CD8-positive, alpha-beta T cell (primary cell): ENCODE measurements at regions of chr12 and their contacts with region 1.

Region 1: DNA sequence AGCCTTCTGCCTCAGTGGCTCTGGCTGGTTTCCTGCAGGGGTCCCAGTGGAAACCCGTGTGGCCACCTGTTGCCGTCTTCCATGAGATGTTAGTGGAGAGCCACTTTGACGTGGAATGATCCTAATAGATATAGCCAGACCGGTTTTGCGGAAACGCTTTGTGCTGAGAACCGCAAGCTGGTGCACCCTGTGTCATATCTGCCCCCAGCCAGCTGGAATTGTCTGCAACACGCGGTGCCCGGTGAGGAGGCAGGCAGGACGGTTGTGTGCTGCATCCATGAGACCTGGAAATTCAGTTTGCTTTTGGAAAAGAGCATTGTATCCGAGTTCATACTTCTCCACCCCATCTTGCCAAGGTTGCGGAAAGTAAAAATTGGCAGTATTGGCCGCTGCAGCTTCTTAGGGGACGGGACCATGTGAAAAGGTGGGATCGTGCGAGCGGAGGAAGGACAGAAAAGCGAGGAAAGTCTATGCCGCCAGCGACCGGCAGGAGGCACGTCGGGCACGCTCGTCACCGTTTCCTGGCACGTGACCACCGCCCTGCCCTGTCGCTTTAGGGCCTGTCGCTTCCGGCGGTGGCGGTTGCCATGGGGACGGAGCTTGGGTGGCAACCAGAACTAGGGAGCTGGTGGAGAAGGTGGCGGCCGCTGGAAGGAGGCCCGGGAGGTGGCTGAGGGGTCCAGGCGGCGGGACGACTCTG is at the start of gene CFAP251:
- DNase-seq: peak; percentile 86 to 98 (median 97)
- ATAC-seq: peak; percentile 97
- H3K4me3 ChIP-seq: peak within 1 kb of the TSS; percentile 43 to 54
- H3K4me3 Mint-ChIP-seq: peak within 1 kb of the TSS; percentile 84
- H3K27ac ChIP-seq: peak within 1 kb of the TSS; percentile 54 to 84
- H3K27ac Mint-ChIP-seq: peak within 1 kb of the TSS; percentile 90
- H3K4me1 ChIP-seq: peaks cover 11% of the 10 kb centered on the region
- H3K4me1 Mint-ChIP-seq: peaks cover 12% of the 10 kb centered on the region
- H3K27me3 ChIP-seq: no peaks in the 10 kb centered on the region
- H3K27me3 Mint-ChIP-seq: no peaks in the 10 kb centered on the region
- CTCF ChIP-seq: peak; percentile 61
- total RNA-seq, gene CFAP251: 0.33 to 0.68 TPM

Region 2: GRCh38 chr12:121536899-121537813 is 381.0 kb before region 1 on chr12:
- CTCF ChIA-PET with region 1: no interaction called
- POLR2A ChIA-PET with region 1: no interaction called
- intact Hi-C with region 1: loop called in 1 of 2 experiments (anchors 10 kb)
- DNase-seq: peak in 8 of 9 experiments; percentile 22 to 83 (median 58)
- ATAC-seq: peak; percentile 5
- H3K4me3 ChIP-seq: peak overlapping the region; percentile 52 to 68
- H3K4me3 Mint-ChIP-seq: peak overlapping the region; percentile 80
- H3K27ac ChIP-seq: peak overlapping the region; percentile 80 to 83
- H3K27ac Mint-ChIP-seq: peak overlapping the region; percentile 96
- H3K4me1 ChIP-seq: peaks cover 34% of the 10 kb centered on the region
- H3K4me1 Mint-ChIP-seq: peaks cover 43% of the 10 kb centered on the region
- H3K27me3 ChIP-seq: no peaks in the 10 kb centered on the region
- H3K27me3 Mint-ChIP-seq: no peaks in the 10 kb centered on the region
- CTCF ChIP-seq: no peak

Region 3: DNA sequence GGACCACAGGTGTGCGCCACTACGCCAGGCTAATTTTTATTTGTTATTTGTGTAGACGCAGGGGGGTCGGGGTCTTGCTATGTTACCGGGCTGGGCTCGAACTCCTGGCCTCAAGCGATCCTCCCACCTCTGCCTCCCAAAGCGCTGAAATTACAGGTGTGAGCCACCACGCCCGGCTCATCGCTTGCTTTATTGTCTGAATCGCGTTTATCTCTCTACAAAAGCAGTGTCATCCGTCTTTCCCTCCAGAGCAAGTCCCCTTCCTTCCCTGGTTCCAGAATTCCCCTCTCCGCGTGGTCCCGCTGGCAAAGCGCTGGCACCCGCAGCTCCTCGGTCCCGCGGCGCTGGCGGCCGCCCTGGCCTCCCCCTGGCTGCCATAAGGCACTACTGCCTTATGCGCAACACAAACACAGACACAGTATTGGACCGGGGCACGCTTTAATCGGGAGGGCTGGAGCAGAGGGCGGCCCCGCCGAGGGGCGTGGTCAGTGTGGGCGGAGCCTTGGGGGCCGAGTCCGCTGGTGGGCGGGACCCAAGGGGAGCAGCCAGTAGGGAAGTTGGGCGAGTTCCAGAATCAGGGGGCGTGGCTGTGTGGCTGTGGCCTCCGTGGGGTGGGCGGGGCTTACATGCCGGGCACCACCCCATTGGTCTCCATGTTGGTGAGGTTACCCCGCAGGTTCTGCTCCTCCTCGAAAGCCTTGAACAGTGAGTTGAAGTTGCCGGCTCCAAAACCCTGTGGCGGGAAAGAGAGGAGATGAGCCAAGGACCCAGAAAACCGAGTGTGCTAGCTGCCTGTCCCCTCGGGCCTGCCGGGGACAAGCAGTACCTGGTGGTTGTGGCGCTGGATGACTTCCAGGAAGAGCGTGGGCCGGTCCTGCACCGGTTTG is 78.8 kb before region 1 on chr12:
- CTCF ChIA-PET with region 1: no interaction called
- POLR2A ChIA-PET with region 1: no interaction called
- intact Hi-C with region 1: loop called in 1 of 2 experiments (anchors 1 kb)
- DNase-seq: peak; percentile 99 to 100 (median 100)
- ATAC-seq: peak; percentile 97
- H3K4me3 ChIP-seq: peak overlapping the region; percentile 73 to 95
- H3K4me3 Mint-ChIP-seq: peak overlapping the region; percentile 97
- H3K27ac ChIP-seq: peak overlapping the region; percentile 34 to 54
- H3K27ac Mint-ChIP-seq: peak overlapping the region; percentile 88
- H3K4me1 ChIP-seq: peaks cover 7% of the 10 kb centered on the region
- H3K4me1 Mint-ChIP-seq: peaks cover 13% of the 10 kb centered on the region
- H3K27me3 ChIP-seq: no peaks in the 10 kb centered on the region
- H3K27me3 Mint-ChIP-seq: no peaks in the 10 kb centered on the region
- CTCF ChIP-seq: peak; percentile 27

Region 4: DNA sequence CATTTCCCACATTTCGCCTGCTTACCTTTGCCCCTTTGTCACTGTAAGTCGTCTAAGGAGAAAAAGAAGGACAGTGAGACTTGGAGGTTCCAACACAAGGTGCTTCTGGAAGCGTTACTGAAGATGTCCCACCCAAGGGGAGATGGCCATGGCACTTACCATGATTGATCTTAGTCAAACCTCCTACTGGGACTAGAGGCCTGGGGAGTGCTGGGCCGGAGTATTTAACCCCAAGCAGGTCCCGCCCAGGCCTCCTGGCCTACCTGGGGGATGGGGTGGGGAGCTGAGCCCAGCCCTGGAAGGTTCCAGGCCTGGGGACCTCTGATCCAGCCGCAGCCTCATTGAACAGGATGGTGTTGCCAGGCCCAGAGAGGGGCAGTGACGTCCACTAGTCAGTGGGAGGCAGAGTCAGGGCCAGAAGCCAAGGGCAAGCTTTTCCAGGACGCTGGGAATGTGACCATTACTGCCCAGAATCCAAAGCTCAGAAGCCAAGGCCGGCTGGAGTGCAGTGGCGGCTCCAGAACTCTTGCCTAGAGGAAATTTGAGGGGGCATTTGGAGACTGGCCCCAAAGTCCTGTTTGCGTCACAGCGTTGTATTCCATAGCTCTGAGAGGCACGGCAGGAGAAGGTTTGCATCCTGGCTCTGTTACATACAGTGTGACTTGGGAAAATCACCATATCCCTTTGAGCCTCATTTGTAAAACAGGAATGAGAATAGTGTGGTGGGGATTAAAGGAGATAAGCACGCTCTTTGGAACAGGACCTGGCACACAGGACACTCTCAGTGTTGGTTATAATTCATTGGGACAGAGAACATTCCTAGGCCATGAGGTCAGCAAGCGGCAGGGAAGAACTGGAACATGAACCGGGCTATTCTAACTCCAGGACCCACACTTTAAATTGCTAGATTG is 59.2 kb before region 1 on chr12 and contains the start of gene HPD:
- CTCF ChIA-PET with region 1: no interaction called
- POLR2A ChIA-PET with region 1: no interaction called
- intact Hi-C with region 1: no loop called
- DNase-seq: no peak
- ATAC-seq: no peak
- H3K4me3 ChIP-seq: no peak within 1 kb of the TSS
- H3K4me3 Mint-ChIP-seq: no peak within 1 kb of the TSS
- H3K27ac ChIP-seq: no peak within 1 kb of the TSS
- H3K27ac Mint-ChIP-seq: no peak within 1 kb of the TSS
- H3K4me1 ChIP-seq: no peaks in the 10 kb centered on the region
- H3K4me1 Mint-ChIP-seq: no peaks in the 10 kb centered on the region
- H3K27me3 ChIP-seq: no peaks in the 10 kb centered on the region
- H3K27me3 Mint-ChIP-seq: no peaks in the 10 kb centered on the region
- CTCF ChIP-seq: no peak
- total RNA-seq, gene HPD: not detected

Region 5: GRCh38 chr12:122021822-122022526 is 103.8 kb after region 1 on chr12 and contains the start of gene BCL7A:
- CTCF ChIA-PET with region 1: interaction called, 7 read pairs
- POLR2A ChIA-PET with region 1: no interaction called
- intact Hi-C with region 1: loop called (anchors 2 kb)
- DNase-seq: peak; percentile 34 to 75 (median 53)
- ATAC-seq: peak; percentile 78
- H3K4me3 ChIP-seq: peak within 1 kb of the TSS; percentile 37 to 57
- H3K4me3 Mint-ChIP-seq: peak within 1 kb of the TSS; percentile 91
- H3K27ac ChIP-seq: no peak within 1 kb of the TSS
- H3K27ac Mint-ChIP-seq: peak within 1 kb of the TSS; percentile 75
- H3K4me1 ChIP-seq: peaks cover 18% of the 10 kb centered on the region
- H3K4me1 Mint-ChIP-seq: peaks cover 12% of the 10 kb centered on the region
- H3K27me3 ChIP-seq: peaks cover 0 to 4% of the 10 kb centered on the region in 2 experiments
- H3K27me3 Mint-ChIP-seq: peaks cover 4% of the 10 kb centered on the region
- CTCF ChIP-seq: no peak
- total RNA-seq, gene BCL7A: 6.8 to 7.8 TPM

Region 6: GRCh38 chr12:122064025-122064777 is 146.1 kb after region 1 on chr12:
- CTCF ChIA-PET with region 1: no interaction called
- POLR2A ChIA-PET with region 1: no interaction called
- intact Hi-C with region 1: no loop called
- DNase-seq: peak in 5 of 9 experiments; percentile 21 to 61 (median 44)
- ATAC-seq: peak; percentile 84
- H3K4me3 ChIP-seq: no peak overlapping the region
- H3K4me3 Mint-ChIP-seq: no peak overlapping the region
- H3K27ac ChIP-seq: no peak overlapping the region
- H3K27ac Mint-ChIP-seq: no peak overlapping the region
- H3K4me1 ChIP-seq: peaks cover 16% of the 10 kb centered on the region
- H3K4me1 Mint-ChIP-seq: peaks cover 28% of the 10 kb centered on the region
- H3K27me3 ChIP-seq: no peaks in the 10 kb centered on the region
- H3K27me3 Mint-ChIP-seq: no peaks in the 10 kb centered on the region
- CTCF ChIP-seq: no peak

Region 7: GRCh38 chr12:122190842-122191668 is 272.9 kb after region 1 on chr12:
- CTCF ChIA-PET with region 1: interaction called, 3 read pairs
- POLR2A ChIA-PET with region 1: no interaction called
- intact Hi-C with region 1: loop called (anchors 2 to 5 kb)
- DNase-seq: peak; percentile 41 to 78 (median 68)
- ATAC-seq: peak; percentile 93
- H3K4me3 ChIP-seq: no peak overlapping the region
- H3K4me3 Mint-ChIP-seq: no peak overlapping the region
- H3K27ac ChIP-seq: no peak overlapping the region
- H3K27ac Mint-ChIP-seq: no peak overlapping the region
- H3K4me1 ChIP-seq: peaks cover 3% of the 10 kb centered on the region
- H3K4me1 Mint-ChIP-seq: peaks cover 2% of the 10 kb centered on the region
- H3K27me3 ChIP-seq: no peaks in the 10 kb centered on the region
- H3K27me3 Mint-ChIP-seq: peaks cover 3% of the 10 kb centered on the region
- CTCF ChIP-seq: peak; percentile 69

Region 8: DNA sequence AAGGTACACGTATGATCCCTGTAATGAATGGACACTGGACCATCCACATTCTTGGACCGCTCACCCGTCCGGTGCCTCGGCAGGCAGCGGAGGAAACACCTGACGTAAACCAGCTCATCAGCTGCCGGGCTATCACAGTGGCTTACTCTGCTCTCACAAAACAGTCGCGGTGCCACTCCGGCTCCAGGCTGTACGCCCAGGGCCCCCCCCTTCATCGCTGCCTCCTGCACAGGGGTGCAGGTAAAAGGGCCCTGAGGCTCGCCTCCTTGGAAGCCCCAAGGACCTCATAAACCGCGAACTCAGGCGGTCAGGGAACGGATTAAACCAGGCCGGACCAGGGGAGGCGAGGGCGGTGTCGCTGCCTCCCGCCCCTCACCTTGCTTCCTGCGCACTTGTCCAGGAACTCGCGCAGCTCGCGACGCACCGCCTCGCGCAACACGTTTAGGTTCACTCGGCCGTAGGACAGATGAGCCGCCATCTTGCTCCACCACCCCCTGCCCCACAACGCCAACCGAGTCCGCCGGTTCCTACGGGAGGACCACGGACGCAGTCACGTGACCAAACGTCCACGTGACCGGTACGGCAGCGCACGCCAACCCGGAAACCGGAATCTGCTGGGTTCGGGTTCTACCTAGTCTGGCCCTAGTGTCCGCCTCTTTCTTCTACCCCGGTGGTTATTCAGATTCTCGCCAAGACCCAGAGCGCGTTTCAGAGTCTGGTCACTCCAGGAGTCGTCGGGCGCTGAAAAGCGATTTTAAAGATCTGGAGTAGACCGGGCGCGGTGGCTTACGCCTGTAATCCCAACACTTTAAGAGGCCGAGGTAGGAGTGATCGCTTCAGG is 348.0 kb after region 1 on chr12 and contains the start of gene VPS33A:
- CTCF ChIA-PET with region 1: no interaction called
- POLR2A ChIA-PET with region 1: no interaction called
- intact Hi-C with region 1: loop called in 1 of 2 experiments (anchors 1 kb)
- DNase-seq: peak; percentile 82 to 97 (median 92)
- ATAC-seq: peak; percentile 72
- H3K4me3 ChIP-seq: peak within 1 kb of the TSS; percentile 89 to 95
- H3K4me3 Mint-ChIP-seq: peak within 1 kb of the TSS; percentile 97
- H3K27ac ChIP-seq: peak within 1 kb of the TSS; percentile 95 to 96
- H3K27ac Mint-ChIP-seq: peak within 1 kb of the TSS; percentile 100
- H3K4me1 ChIP-seq: peaks cover 9% of the 10 kb centered on the region
- H3K4me1 Mint-ChIP-seq: peaks cover 36% of the 10 kb centered on the region
- H3K27me3 ChIP-seq: no peaks in the 10 kb centered on the region
- H3K27me3 Mint-ChIP-seq: no peaks in the 10 kb centered on the region
- CTCF ChIP-seq: no peak
- total RNA-seq, gene VPS33A: 11.6 to 13.1 TPM